ENCODE measurements at regions of chr5 and their contacts with region 1.

Region 1: GRCh38 chr5:139293504-139294373 is at the start of gene MATR3:
- DNase-seq: peak; percentile 98
- ATAC-seq: peak; percentile 98
- total RNA-seq, gene MATR3: 208 TPM

Region 2: GRCh38 chr5:139120521-139120920 is 173.2 kb before region 1 on chr5:
- intact Hi-C with region 1: no loop called
- DNase-seq: peak; percentile 12
- ATAC-seq: no peak

Region 3: DNA sequence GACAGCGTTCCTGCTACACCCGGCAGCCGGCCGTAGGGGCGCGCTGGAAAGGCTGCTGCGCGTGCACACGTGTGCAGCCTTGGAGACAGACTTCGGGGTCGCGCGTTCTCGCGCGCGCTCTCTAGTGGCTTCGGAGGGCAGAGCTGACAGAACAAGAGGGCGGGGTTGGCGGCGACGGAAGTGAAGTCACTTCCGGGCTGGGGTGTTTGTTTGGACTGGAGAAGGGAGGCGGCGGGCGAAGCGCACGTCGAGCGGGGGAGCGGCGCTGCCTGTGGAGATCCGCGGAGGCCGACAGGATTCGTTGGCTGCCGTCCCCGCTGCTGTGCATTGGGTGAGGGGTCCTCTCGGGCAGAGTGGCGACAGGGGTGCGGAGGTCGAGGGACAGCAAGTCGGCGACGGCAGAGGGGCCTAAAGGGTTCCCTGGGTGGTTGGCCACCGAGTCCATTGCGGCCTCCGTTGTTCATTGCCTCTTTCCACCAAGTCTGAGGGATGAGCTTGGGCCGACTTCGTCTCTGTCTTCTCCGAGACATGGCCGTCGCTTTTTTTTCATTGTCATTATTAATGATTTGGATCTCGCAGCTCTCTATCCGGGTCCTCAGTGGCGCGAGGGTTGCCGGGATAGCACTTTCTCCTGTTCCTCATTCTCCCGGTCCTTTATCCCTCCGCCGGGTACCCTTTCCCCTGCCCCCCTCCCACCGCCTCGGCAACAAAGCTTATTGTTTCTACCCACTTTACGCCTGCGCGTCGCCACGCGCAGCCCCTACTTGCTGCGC is 48.1 kb after region 1 on chr5 and contains the start of gene PAIP2:
- intact Hi-C with region 1: loop called (anchors 5 kb)
- DNase-seq: peak; percentile 99
- ATAC-seq: peak; percentile 98
- total RNA-seq, gene PAIP2: 92.2 TPM

Region 4: GRCh38 chr5:139745800-139746690 is 452.3 kb after region 1 on chr5:
- intact Hi-C with region 1: no loop called
- DNase-seq: peak; percentile 76
- ATAC-seq: peak; percentile 81